Activated CD4-positive, alpha-beta T cell treated with anti-CD3 and anti-CD28 coated beads, Interleukin-2, amount 10 ng/mL, durations not matched to agents 7 days and 5 days (primary cell): ENCODE measurements at regions of chr12 and their contacts with region 1.

Region 1: GRCh38 chr12:89019408-89020120 is 332.7 kb downstream of the DUSP6 start:
- DNase-seq: peak; percentile 87
- H3K4me3 Mint-ChIP-seq: no peak overlapping the region
- H3K27ac Mint-ChIP-seq: no peak overlapping the region
- H3K4me1 Mint-ChIP-seq: peaks cover 27% of the 10 kb centered on the region
- H3K27me3 Mint-ChIP-seq: peaks cover 2% of the 10 kb centered on the region

Region 2: DNA sequence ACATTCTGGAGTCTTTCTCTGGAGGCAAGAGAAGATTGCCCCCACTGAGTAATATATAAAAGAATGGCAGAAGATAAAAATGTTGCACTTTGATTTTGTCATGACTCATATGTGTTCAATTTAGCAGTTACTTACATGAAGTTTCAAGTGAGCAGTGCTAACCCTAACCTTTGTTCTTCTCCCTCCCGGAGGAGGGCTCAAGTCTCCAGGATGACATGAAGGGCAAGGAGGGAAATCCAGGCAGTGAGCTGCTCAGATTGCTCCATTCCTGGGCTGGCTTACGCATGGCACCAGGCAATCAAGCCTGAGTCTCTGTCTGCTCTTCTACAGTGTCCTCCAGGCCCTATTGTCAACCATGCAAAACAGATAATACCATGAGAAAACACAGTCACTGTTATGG is 10.4 kb after region 1 on chr12:
- CTCF ChIA-PET with region 1: interaction called, 10 read pairs
- POLR2A ChIA-PET with region 1: no interaction called
- DNase-seq: no peak
- H3K4me3 Mint-ChIP-seq: no peak overlapping the region
- H3K27ac Mint-ChIP-seq: no peak overlapping the region
- H3K4me1 Mint-ChIP-seq: peaks cover 31% of the 10 kb centered on the region
- H3K27me3 Mint-ChIP-seq: no peaks in the 10 kb centered on the region

Region 3: GRCh38 chr12:89352492-89353187 is 333.1 kb after region 1 on chr12 and contains the start of gene DUSP6:
- CTCF ChIA-PET with region 1: interaction called, 11 read pairs
- POLR2A ChIA-PET with region 1: no interaction called
- DNase-seq: peak; percentile 96
- H3K4me3 Mint-ChIP-seq: peak within 1 kb of the TSS; percentile 98
- H3K27ac Mint-ChIP-seq: peak within 1 kb of the TSS; percentile 95
- H3K4me1 Mint-ChIP-seq: peaks cover 58% of the 10 kb centered on the region
- H3K27me3 Mint-ChIP-seq: no peaks in the 10 kb centered on the region
- total RNA-seq, gene DUSP6: 48.2 to 48.5 TPM

Region 4: GRCh38 chr12:89461649-89462612 is 442.4 kb after region 1 on chr12:
- CTCF ChIA-PET with region 1: interaction called, 21 read pairs
- POLR2A ChIA-PET with region 1: no interaction called
- DNase-seq: no peak
- H3K4me3 Mint-ChIP-seq: peak overlapping the region; percentile 42
- H3K27ac Mint-ChIP-seq: peak overlapping the region; percentile 73
- H3K4me1 Mint-ChIP-seq: peaks cover 56% of the 10 kb centered on the region
- H3K27me3 Mint-ChIP-seq: no peaks in the 10 kb centered on the region

Region 5: DNA sequence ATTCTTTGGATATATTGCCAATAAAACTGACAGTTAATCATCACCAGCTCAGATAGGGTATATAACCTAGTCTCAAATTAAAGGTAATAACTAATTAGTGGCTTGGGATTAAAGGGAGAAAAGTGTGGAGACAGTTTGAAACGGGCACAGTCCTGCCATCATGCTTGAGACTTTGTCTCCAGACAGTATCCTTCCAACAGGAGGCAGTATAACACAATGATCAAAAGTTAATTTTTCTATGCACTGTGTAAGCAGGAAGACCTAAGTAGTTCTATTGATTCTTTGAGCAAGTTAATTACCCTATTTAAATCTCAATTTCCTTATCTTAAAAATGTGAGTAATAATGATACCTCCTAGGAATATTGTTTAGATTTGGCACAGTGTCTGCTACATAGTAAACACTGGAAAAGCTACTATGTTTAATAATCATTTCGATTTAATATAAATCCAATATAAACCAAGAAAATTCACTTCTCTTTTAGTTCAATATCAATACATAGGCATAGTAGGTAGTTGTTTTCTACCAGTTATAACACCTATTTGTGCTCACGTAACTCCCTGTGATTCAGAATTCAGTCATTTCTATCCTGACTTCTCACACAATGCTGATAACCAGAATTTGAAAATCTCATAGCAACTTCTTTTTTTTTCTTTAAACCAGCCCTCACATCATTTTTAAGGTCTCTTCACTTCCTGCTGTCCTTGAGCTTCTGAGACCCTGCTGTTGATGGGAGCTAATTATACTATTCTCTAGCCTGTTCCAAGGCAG is 451.4 kb after region 1 on chr12:
- CTCF ChIA-PET with region 1: interaction called, 34 read pairs
- POLR2A ChIA-PET with region 1: interaction called, 4 read pairs
- DNase-seq: peak; percentile 36
- H3K4me3 Mint-ChIP-seq: no peak overlapping the region
- H3K27ac Mint-ChIP-seq: peak overlapping the region; percentile 79
- H3K4me1 Mint-ChIP-seq: peaks cover 77% of the 10 kb centered on the region
- H3K27me3 Mint-ChIP-seq: no peaks in the 10 kb centered on the region

Region 6: DNA sequence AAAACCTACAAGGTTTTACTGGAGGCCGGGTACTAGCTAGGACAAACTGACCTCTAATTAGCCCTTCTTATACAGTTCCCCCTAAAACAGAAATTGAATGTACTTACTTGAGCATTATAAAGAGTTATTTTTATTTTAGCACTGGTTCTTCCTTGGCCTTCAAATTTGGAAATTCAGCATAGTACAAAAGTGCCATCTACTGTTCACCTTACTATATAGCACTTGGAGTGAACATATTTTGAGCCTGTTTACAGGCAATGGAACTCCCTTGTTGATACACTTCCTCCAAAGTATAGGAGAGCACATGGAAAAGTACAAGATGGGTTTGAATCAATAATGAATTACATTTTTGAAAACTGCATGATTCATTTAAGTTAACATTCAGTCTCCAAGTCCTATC is 510.2 kb after region 1 on chr12:
- CTCF ChIA-PET with region 1: interaction called, 17 read pairs
- POLR2A ChIA-PET with region 1: interaction called, 4 read pairs
- DNase-seq: peak; percentile 23
- H3K4me3 Mint-ChIP-seq: no peak overlapping the region
- H3K27ac Mint-ChIP-seq: no peak overlapping the region
- H3K4me1 Mint-ChIP-seq: peaks cover 28% of the 10 kb centered on the region
- H3K27me3 Mint-ChIP-seq: no peaks in the 10 kb centered on the region